Dorsolateral prefrontal cortex (tissue), 120 donors: ENCODE measurements at regions of chrX and their contacts with region 1.

Region 1: GRCh38 chrX:119067023-119067739 is 5.6 kb upstream of the CT47C1 start:
- DNase-seq: peak; percentile 27 to 62 (median 52)
- H3K4me3 ChIP-seq: no peak overlapping the region
- H3K27ac ChIP-seq: no peak overlapping the region
- H3K27me3 ChIP-seq: peaks cover 0 to 57% (median 30%) of the 10 kb centered on the region in 45 donors
- CTCF ChIP-seq: peak in 55 of 56 donors; percentile 33 to 76 (median 63)

Region 2: DNA sequence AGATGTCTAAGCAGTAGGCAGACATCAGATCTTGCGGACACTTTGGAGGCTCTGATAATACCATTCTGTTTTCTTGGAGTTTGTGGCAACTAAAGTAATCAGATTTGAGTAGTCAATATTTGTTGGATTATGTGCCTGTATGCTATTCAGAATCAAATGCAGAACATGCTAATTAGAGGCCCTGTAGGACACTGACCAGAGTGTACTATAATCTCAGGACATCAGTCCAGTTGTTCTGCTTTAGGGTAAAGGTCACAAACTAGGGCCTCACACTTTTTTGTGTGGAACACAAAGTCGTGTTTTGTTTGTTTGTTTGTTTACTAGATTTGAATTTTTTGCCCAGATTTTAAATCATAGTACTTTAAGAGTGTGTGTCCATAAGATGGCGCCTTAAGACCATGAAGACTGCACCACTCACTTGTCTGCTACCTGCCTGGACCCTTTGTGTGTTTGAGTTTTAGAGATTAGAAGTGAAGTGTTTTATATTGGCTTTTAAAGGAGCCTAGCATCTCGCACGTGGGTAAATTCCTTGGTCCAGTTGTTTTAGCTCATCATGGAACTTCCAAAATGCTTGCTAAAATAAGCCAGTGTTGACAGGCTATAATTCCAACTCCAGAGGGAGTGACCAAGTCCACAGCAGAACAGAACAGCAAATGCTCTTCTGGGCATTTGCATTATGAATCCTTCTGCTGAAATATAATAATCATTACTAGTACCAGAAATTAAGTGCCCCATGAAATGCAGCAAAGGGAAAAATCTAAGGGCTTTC is 305.1 kb before region 1 on chrX:
- intact Hi-C with region 1: loop called in 1 of 2 experiments (anchors 5 kb)
- DNase-seq: no peak
- H3K4me3 ChIP-seq: no peak overlapping the region
- H3K27ac ChIP-seq: no peak overlapping the region
- H3K27me3 ChIP-seq: peaks cover 0 to 44% (median 7%) of the 10 kb centered on the region in 45 donors
- CTCF ChIP-seq: peak in 3 of 56 donors; percentile 15 to 35 (median 18)

Region 3: GRCh38 chrX:119004920-119005524 is 62.2 kb before region 1 on chrX:
- intact Hi-C with region 1: loop called in 1 of 2 experiments (anchors 5 kb)
- DNase-seq: peak in 7 of 10 donors; percentile 43 to 75 (median 46)
- H3K4me3 ChIP-seq: no peak overlapping the region
- H3K27ac ChIP-seq: no peak overlapping the region
- H3K27me3 ChIP-seq: peaks cover 0 to 71% (median 7%) of the 10 kb centered on the region in 45 donors
- CTCF ChIP-seq: peak in 55 of 56 donors; percentile 18 to 86 (median 74)